ENCODE measurements at regions of chr18 and their contacts with region 1.

Region 1: GRCh38 chr18:10519999-10520935 is 5.6 kb upstream of the NAPG start:
- DNase-seq: peak; percentile 78
- H3K4me3 Mint-ChIP-seq: no peak overlapping the region
- H3K27ac Mint-ChIP-seq: no peak overlapping the region
- H3K4me1 Mint-ChIP-seq: peaks cover 9% of the 10 kb centered on the region
- H3K27me3 Mint-ChIP-seq: peaks cover 42% of the 10 kb centered on the region

Region 2: DNA sequence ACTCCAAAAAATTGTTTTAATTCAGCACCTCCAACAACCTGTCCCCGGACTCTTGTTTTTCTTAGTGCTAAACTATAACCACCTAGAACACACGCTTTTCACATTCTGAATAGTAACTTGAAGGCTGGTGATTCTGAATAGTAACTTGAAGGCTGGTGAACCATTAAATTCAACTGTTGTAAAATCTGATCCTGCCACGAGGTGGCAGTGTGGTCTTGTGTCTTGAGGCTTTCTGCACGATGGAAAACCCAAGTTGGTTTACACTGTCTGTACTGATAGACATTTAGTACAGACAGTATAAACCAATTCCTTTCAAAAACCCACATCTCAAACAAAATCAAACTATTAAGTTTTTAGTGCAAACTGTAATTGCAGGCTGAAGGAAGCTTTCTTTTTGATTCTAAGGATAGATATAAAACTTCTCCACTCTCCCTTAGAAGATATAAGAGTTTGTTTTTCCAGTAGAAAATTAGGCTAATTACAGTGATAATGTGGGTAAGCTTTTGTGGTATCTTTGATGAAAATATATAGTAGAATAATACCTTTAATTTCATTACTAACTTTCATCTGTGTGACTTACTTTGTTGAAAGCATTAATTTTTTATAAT is 548.9 kb before region 1 on chr18:
- CTCF ChIA-PET with region 1: interaction called, 47 read pairs
- DNase-seq: peak; percentile 77
- H3K4me3 Mint-ChIP-seq: no peak overlapping the region
- H3K27ac Mint-ChIP-seq: no peak overlapping the region
- H3K4me1 Mint-ChIP-seq: no peaks in the 10 kb centered on the region
- H3K27me3 Mint-ChIP-seq: peaks cover 33% of the 10 kb centered on the region

Region 3: DNA sequence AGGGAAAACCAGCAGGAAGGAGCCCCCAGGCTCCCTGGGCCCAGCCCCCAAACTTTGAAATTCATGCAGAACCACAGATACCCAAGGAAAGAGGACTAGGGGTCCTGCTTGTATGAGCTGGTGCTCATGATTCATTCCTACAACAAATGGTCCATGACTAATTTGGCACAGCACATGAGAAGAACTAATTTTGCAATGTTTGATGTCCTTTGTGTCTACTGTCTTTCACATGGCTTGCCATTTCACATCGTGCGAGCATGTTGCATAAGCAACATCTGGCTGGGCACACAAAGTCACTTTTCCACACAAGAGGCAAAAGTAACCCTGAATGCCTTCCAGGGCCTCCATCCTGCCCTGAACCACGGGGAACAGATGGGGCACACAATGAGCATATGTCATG is 215.4 kb before region 1 on chr18:
- CTCF ChIA-PET with region 1: no interaction called
- DNase-seq: no peak
- H3K4me3 Mint-ChIP-seq: no peak overlapping the region
- H3K27ac Mint-ChIP-seq: no peak overlapping the region
- H3K4me1 Mint-ChIP-seq: no peaks in the 10 kb centered on the region
- H3K27me3 Mint-ChIP-seq: no peaks in the 10 kb centered on the region

Region 4: DNA sequence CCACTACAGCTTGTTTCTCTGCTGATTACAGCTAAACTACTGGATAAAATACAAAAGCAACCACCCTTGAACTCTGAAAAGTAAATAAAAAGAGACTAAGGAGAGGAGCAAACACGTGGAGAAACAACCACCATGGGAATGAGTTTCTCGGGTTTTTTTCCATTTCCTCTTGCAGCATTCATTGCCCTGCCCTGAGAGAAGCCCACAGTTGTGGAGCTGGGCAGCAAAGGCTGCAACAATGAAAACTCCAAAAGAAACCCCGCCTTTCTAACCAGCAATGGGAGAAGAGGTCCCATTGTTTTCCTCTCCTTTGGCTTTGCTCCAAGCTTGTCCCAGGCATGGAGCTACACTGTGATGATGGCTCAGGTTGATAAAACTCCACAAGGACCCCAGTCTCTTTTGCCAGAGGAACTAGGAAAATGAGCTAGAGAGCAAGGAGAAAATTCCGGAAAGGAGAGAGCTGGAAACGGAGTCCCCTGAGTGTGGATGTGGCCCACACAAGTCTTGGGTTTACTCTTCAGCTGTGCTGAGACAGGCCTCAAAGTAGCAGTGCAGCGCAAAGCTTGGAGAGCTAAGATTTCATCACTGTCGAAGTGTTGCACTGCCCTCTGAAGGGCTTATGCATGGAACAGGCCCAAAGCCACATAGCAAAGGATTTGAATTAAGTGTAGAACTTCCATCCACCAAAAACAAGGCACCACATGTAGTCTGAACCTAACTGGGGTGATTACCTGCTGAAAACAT is 26.5 kb after region 1 on chr18:
- CTCF ChIA-PET with region 1: no interaction called
- DNase-seq: no peak
- H3K4me3 Mint-ChIP-seq: no peak overlapping the region
- H3K27ac Mint-ChIP-seq: no peak overlapping the region
- H3K4me1 Mint-ChIP-seq: no peaks in the 10 kb centered on the region
- H3K27me3 Mint-ChIP-seq: no peaks in the 10 kb centered on the region